Dendritic cell treated with granulocyte-macrophage colony-stimulating factor and Interleukin-4, amounts not matched to agents 40 ng/mL and 50 ng/mL, for 4 days (primary cell): ENCODE measurements at regions of chr10 and their contacts with region 1.

Region 1: DNA sequence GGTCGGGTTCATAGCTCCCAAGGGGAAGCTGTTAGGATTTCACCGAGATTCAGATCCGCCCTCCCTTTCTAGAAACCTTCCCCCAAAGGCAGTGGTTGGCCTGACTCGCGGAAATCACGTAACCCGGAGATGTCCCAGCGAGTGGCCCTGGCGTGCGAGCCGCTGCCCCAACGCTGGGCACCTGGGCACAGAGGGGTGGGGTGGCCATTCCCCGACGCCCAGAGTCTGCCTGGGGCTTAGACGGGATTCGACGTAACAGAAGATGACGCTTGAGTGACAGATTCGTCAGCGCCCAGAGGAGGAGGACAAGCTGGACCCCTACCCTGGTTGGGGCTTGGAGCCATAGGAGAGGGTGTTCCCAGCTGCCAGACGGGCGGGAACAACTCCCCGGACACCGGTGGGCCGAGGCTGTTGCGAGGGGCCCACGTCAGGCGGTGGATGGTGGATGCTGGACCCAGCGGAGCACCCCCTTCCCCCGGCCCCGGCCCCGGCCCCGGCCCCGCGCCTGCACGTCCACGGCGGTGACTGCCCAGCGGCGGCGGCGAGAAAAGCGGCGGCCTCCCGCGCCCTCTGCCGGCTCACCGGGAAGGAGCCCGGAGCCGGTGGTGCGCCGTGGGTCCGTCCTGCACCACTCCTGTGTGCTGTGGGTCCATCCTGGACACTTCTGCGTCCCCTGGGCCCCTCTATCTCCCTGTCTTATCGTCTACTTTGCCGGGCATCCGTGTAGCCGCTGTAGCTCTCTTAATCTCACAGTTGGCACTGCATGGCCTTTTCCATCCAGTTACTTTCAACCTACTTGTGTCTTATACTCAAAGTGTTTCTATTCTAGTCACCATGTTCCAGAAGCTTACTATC is 35.4 kb upstream of the KNDC1 start:
- H3K4me3 Mint-ChIP-seq: no peak overlapping the region
- H3K27ac Mint-ChIP-seq: no peak overlapping the region
- H3K4me1 Mint-ChIP-seq: peaks cover 10% of the 10 kb centered on the region
- H3K27me3 Mint-ChIP-seq: peaks cover 33% of the 10 kb centered on the region

Region 2: DNA sequence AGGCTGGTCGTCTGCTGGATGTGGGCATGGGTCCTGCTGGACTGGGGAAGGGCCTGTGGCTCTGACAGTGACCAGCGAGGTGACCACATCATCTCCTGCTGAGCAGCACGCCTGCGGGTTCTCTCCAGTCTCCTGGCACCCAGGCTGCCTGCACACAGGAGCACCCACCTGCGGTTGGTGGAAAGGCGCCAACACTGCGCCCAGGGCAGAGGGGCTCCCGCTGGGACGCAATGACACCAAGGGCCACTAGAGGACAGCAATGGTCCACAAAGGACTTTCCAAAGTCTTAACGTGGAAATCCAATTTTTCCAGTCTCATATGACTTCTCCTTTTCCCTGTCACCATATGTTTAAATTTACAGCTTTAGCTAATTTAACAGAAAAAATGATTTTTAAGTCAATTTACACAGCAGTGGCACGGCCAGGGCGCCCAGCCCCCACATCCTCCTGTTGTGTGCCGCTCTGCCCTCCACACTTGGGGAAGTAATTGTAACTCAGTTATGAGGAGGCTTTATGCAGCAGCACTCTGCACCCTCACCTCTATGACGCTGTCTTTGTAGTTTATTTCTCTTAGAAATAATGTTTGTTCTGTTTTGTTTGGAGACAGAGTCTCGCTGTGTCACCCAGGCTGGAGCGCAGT is 220.3 kb before region 1 on chr10:
- intact Hi-C with region 1: loop called (anchors 2 kb)
- H3K4me3 Mint-ChIP-seq: no peak overlapping the region
- H3K27ac Mint-ChIP-seq: no peak overlapping the region
- H3K4me1 Mint-ChIP-seq: peaks cover 9% of the 10 kb centered on the region
- H3K27me3 Mint-ChIP-seq: peaks cover 16% of the 10 kb centered on the region

Region 3: GRCh38 chr10:132939957-132940790 is 184.4 kb before region 1 on chr10:
- intact Hi-C with region 1: loop called (anchors 1 kb)
- H3K4me3 Mint-ChIP-seq: no peak overlapping the region
- H3K27ac Mint-ChIP-seq: no peak overlapping the region
- H3K4me1 Mint-ChIP-seq: peaks cover 6% of the 10 kb centered on the region
- H3K27me3 Mint-ChIP-seq: peaks cover 67% of the 10 kb centered on the region

Region 4: GRCh38 chr10:133196221-133196915 is 71.8 kb after region 1 on chr10:
- intact Hi-C with region 1: no loop called
- H3K4me3 Mint-ChIP-seq: no peak overlapping the region
- H3K27ac Mint-ChIP-seq: no peak overlapping the region
- H3K4me1 Mint-ChIP-seq: no peaks in the 10 kb centered on the region
- H3K27me3 Mint-ChIP-seq: peaks cover 30% of the 10 kb centered on the region